ENCODE measurements at regions of chrX and their contacts with region 1.

Region 1: GRCh38 chrX:85052636-85053343 is 49.1 kb downstream of the APOOL start:
- DNase-seq: no peak
- ATAC-seq: no peak
- H3K4me3 Mint-ChIP-seq: no peak overlapping the region
- H3K27ac Mint-ChIP-seq: no peak overlapping the region
- H3K4me1 Mint-ChIP-seq: no peaks in the 10 kb centered on the region
- H3K27me3 Mint-ChIP-seq: no peaks in the 10 kb centered on the region
- CTCF ChIP-seq: no peak

Region 2: GRCh38 chrX:84729809-84730208 is 323.0 kb before region 1 on chrX:
- CTCF ChIA-PET with region 1: interaction called, 5 read pairs
- POLR2A ChIA-PET with region 1: no interaction called
- intact Hi-C with region 1: loop called (anchors 1 kb)
- DNase-seq: no peak
- ATAC-seq: peak; percentile 77
- H3K4me3 Mint-ChIP-seq: no peak overlapping the region
- H3K27ac Mint-ChIP-seq: no peak overlapping the region
- H3K4me1 Mint-ChIP-seq: no peaks in the 10 kb centered on the region
- H3K27me3 Mint-ChIP-seq: no peaks in the 10 kb centered on the region
- CTCF ChIP-seq: no peak

Region 3: DNA sequence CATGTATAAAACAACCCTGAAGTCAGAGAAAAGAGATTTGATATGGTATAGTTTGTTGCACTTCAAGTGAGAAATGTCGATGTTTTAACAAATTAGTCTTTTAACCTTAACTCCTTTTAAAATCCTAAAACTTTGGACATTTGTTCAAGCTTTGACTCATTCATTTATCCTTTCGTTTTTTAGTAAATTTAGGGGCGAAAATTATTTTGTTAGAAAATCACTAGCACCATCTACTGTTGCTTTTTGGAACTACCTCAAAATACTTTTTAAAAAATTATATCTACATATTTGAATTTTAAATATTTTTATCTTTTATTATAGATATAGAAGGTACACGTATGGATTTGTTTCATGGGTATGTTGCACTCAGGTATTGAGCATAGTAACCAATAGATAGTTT is 491.8 kb after region 1 on chrX:
- CTCF ChIA-PET with region 1: no interaction called
- POLR2A ChIA-PET with region 1: no interaction called
- intact Hi-C with region 1: no loop called
- DNase-seq: no peak
- ATAC-seq: no peak
- H3K4me3 Mint-ChIP-seq: no peak overlapping the region
- H3K27ac Mint-ChIP-seq: no peak overlapping the region
- H3K4me1 Mint-ChIP-seq: no peaks in the 10 kb centered on the region
- H3K27me3 Mint-ChIP-seq: no peaks in the 10 kb centered on the region
- CTCF ChIP-seq: no peak

Measured in activated B cell treated with CpG ODN at 0.5 μM for 24 hours (primary cell).